Activated B cell treated with CpG ODN at 0.5 μM for 24 hours (primary cell): ENCODE measurements at regions of chr12 and their contacts with region 1.

Region 1: GRCh38 chr12:47715393-47715876 is 9.6 kb upstream of the RPAP3 start:
- DNase-seq: peak; percentile 54
- ATAC-seq: peak; percentile 87
- H3K4me3 Mint-ChIP-seq: no peak overlapping the region
- H3K27ac Mint-ChIP-seq: no peak overlapping the region
- H3K4me1 Mint-ChIP-seq: peaks cover 37% of the 10 kb centered on the region
- H3K27me3 Mint-ChIP-seq: no peaks in the 10 kb centered on the region
- CTCF ChIP-seq: peak; percentile 18

Region 2: DNA sequence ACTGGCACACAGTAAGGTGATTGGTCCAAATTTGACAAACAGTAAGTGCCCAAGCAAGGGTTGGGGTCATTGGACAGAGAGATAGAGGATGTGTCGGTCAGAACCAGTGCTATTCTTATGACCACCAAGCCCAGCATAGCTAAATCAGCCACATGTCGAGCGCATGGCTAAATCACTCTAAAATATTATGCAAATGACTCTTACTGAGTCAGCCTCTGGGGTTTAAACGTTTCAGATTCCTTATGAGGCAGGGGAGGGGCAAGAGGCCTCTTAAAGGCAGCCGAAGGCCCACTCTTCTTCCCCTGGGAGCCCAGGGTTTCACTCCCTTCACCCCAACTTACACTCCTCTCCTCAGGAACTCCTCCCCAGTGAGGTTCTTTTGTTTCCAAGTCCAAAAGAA is 10.5 kb after region 1 on chr12:
- CTCF ChIA-PET with region 1: interaction called, 18 read pairs
- POLR2A ChIA-PET with region 1: interaction called, 4 read pairs
- intact Hi-C with region 1: loop called (anchors 1 kb)
- DNase-seq: no peak
- ATAC-seq: peak; percentile 92
- H3K4me3 Mint-ChIP-seq: no peak overlapping the region
- H3K27ac Mint-ChIP-seq: peak overlapping the region; percentile 65
- H3K4me1 Mint-ChIP-seq: peaks cover 37% of the 10 kb centered on the region
- H3K27me3 Mint-ChIP-seq: no peaks in the 10 kb centered on the region
- CTCF ChIP-seq: no peak

Region 3: GRCh38 chr12:47758834-47759690 is 43.6 kb after region 1 on chr12 and contains the start of gene RAPGEF3:
- CTCF ChIA-PET with region 1: interaction called, 25 read pairs
- POLR2A ChIA-PET with region 1: interaction called, 8 read pairs
- intact Hi-C with region 1: loop called (anchors 1 kb)
- DNase-seq: peak; percentile 64
- ATAC-seq: peak; percentile 73
- H3K4me3 Mint-ChIP-seq: peak within 1 kb of the TSS; percentile 81
- H3K27ac Mint-ChIP-seq: no peak within 1 kb of the TSS
- H3K4me1 Mint-ChIP-seq: peaks cover 60% of the 10 kb centered on the region
- H3K27me3 Mint-ChIP-seq: no peaks in the 10 kb centered on the region
- CTCF ChIP-seq: no peak
- total RNA-seq, gene RAPGEF3: 2.7 and 5.0 TPM in 2 replicates

Region 4: DNA sequence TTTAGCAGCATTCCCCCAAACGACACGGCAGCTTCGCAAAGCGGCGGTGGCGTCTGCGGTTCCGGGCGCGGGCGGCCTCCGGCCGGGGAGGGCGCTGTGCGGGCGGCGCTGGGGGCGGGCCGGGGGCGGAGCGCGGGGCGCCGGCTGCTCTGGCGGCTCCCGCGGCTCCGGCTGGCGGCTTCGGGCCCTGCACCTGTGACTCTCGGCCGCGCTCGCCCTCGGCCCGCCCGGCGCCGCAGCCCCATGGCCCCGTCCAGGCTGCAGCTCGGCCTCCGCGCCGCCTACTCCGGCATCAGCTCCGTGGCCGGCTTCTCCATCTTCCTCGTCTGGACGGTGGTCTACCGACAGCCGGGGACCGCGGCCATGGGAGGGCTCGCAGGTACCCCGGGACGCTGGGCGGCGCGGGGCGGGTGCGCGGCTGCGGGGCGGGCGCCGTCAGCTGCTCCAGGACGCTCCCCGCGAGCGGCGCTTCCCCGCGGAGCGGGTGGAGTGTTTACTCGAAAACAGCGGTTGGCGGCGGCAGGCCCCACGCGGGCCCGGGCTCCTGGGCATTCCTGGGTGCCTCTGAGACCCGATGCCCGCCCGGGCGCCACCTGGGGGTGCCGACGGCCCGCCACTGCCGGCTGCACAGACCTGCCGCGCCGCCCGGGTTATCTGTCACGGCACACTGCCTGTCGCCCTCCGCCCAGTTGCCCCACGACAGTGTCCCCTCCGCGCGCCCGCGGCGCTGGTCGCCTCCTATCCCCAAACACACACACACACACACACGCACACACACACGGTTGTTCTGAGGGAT is 57.8 kb after region 1 on chr12 and contains the start of gene SLC48A1:
- CTCF ChIA-PET with region 1: interaction called, 134 read pairs
- POLR2A ChIA-PET with region 1: interaction called, 4 read pairs
- intact Hi-C with region 1: loop called (anchors 1 kb)
- DNase-seq: peak; percentile 82
- ATAC-seq: peak; percentile 94
- H3K4me3 Mint-ChIP-seq: peak within 1 kb of the TSS; percentile 87
- H3K27ac Mint-ChIP-seq: peak within 1 kb of the TSS; percentile 69
- H3K4me1 Mint-ChIP-seq: peaks cover 18% of the 10 kb centered on the region
- H3K27me3 Mint-ChIP-seq: no peaks in the 10 kb centered on the region
- CTCF ChIP-seq: no peak
- total RNA-seq, gene SLC48A1: 12.7 and 12.8 TPM in 2 replicates

Region 5: DNA sequence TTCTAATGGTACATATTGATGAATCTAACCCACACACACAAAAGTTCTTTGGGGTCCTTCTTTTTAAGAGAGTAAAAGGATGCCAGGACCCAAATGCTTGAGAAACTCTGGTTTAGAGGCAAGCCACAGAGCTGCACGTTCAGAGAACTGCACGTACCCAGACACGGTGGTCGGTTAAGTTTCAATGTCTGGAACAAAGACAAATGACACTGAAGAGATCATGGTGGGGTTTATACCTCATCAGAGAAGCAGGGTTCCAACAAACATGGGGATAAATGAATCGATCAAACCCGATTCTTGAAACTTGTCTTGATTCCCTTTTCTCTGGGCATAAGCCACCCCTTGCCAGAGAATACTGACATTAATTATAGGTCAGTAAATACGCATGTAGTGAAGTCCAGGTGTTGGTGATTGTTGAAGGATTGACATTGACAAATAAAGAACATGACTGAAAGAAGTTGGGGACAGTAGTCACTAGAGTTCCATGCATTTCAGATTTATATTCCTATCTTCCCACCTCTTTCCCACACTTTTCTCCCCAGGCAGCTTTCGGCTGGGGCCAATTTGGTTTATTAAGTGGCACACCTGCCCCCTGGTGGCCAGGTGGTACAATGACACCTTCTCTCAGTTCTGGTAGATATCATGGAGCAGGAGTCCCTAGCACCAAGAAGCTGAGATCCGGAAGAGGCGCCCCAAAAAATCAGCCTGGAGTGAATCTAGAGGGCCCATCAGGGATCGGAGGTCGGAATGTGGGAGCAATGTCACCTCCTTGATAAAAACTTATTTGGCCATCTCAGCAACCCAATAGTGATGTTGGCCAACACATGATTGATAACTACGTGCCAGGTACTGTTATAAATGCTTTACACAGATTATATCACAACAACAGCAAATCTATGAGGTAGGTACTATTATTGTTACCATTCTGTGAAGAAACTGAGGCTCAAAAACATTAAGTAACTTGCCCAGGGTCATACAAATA is 122.0 kb after region 1 on chr12:
- CTCF ChIA-PET with region 1: interaction called, 80 read pairs
- POLR2A ChIA-PET with region 1: interaction called, 3 read pairs
- intact Hi-C with region 1: loop called (anchors 1 kb)
- DNase-seq: peak; percentile 53
- ATAC-seq: peak; percentile 52
- H3K4me3 Mint-ChIP-seq: peak overlapping the region; percentile 25
- H3K27ac Mint-ChIP-seq: peak overlapping the region; percentile 36
- H3K4me1 Mint-ChIP-seq: peaks cover 58% of the 10 kb centered on the region
- H3K27me3 Mint-ChIP-seq: no peaks in the 10 kb centered on the region
- CTCF ChIP-seq: no peak

Region 6: DNA sequence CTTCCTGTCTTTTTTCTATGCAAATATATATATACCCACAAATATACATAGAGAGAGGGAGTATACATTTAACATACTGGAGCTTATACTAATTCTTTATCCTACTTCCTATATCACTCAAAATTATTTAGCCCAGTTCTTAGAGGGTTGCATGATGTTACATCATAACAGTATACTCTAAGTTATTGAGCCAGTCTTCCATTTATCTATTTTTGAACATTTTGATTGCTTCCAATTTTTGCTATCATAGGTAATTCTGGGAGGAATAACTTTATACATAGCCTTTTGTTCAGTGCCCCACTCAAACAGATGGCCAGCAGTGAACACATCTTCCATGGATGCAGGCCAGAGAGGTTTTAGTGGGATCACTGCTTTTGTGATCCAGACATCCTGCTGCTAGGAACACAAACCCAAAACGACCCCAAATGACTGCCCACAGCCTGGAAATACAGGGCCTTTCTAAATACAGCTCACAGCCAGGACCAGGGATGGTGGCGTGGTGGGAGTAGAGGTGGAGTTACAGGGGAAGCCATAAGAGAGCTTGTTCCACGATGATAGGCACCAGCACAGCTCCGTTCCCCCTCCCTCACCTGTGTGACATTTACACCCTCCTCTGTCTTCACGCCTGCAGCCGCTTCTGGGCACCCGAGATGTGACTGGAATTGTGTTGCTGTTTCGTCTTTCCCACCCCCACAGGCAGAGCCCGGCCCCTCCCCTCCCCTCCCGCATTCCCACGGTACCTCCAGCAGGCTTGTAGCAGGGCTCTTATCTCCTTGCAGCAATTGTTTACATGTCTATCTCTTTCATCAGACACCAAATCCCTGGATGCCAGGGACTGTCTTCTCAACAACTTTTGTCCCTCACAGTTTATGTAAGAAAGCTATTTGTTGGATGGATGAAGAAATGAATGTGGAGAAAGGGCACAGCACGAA is 135.0 kb after region 1 on chr12:
- CTCF ChIA-PET with region 1: no interaction called
- POLR2A ChIA-PET with region 1: no interaction called
- intact Hi-C with region 1: no loop called
- DNase-seq: no peak
- ATAC-seq: no peak
- H3K4me3 Mint-ChIP-seq: no peak overlapping the region
- H3K27ac Mint-ChIP-seq: no peak overlapping the region
- H3K4me1 Mint-ChIP-seq: no peaks in the 10 kb centered on the region
- H3K27me3 Mint-ChIP-seq: no peaks in the 10 kb centered on the region
- CTCF ChIP-seq: no peak

Region 7: GRCh38 chr12:47963340-47964040 is 248.1 kb after region 1 on chr12 and contains the start of gene TMEM106C:
- CTCF ChIA-PET with region 1: no interaction called
- POLR2A ChIA-PET with region 1: no interaction called
- intact Hi-C with region 1: loop called (anchors 1 kb)
- DNase-seq: peak; percentile 89
- ATAC-seq: peak; percentile 96
- H3K4me3 Mint-ChIP-seq: peak within 1 kb of the TSS; percentile 97
- H3K27ac Mint-ChIP-seq: peak within 1 kb of the TSS; percentile 86
- H3K4me1 Mint-ChIP-seq: peaks cover 18% of the 10 kb centered on the region
- H3K27me3 Mint-ChIP-seq: peaks cover 11% of the 10 kb centered on the region
- CTCF ChIP-seq: peak; percentile 37
- total RNA-seq, gene TMEM106C: 24.5 and 31.3 TPM in 2 replicates

Region 8: GRCh38 chr12:48618541-48618940 is 903.1 kb after region 1 on chr12:
- CTCF ChIA-PET with region 1: no interaction called
- POLR2A ChIA-PET with region 1: no interaction called
- intact Hi-C with region 1: loop called (anchors 10 kb)
- DNase-seq: peak; percentile 27
- ATAC-seq: peak; percentile 79
- H3K4me3 Mint-ChIP-seq: no peak overlapping the region
- H3K27ac Mint-ChIP-seq: no peak overlapping the region
- H3K4me1 Mint-ChIP-seq: no peaks in the 10 kb centered on the region
- H3K27me3 Mint-ChIP-seq: peaks cover 23% of the 10 kb centered on the region
- CTCF ChIP-seq: peak; percentile 90